Mammary epithelial cell (primary cell): ENCODE measurements at regions of chr1 and their contacts with region 1.

Region 1: DNA sequence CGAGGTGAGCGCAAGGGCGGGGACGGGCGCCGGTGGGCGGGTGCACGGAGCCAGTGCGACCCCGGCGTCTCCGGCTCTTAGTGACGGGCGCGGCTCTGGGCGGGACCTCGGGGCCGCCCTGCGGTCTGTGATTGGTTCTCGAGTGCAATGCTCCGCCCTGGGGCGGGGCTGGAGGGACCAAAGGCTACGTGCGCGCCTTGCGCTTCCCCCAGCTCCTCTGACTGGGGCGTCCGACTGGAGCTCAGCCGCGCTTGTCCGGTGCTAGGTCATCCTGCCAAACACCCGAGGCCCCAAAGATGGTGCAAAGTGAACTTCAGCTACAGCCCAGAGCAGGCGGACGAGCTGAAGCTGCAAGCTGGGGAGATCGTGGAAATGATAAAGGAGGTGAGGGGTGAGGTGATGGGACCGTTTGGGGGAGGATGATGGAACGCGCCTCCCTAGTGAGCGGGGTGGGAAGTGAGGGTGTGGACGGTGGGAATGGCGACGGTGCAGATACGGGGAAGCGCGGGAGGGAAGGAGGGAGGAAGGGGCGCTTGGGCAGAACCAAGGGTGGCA is 811 bp downstream of the SH3D21 start:
- DNase-seq: peak; percentile 92
- H3K4me3 ChIP-seq: peak overlapping the region; percentile 41 to 85 (median 59)
- H3K27ac ChIP-seq: peak overlapping the region; percentile 11
- H3K4me1 ChIP-seq: peaks cover 22% of the 10 kb centered on the region
- H3K27me3 ChIP-seq: no peaks in the 10 kb centered on the region
- CTCF ChIP-seq: no peak

Region 2: GRCh38 chr1:36257375-36257767 is 49.6 kb before region 1 on chr1:
- CTCF ChIA-PET with region 1: no interaction called
- dilution Hi-C with region 1: no loop called
- in situ Hi-C with region 1: no loop called
- intact Hi-C with region 1: no loop called
- DNase-seq: peak; percentile 16
- H3K4me3 ChIP-seq: no peak overlapping the region
- H3K27ac ChIP-seq: no peak overlapping the region
- H3K4me1 ChIP-seq: peaks cover 9% of the 10 kb centered on the region
- H3K27me3 ChIP-seq: no peaks in the 10 kb centered on the region
- CTCF ChIP-seq: no peak

Region 3: DNA sequence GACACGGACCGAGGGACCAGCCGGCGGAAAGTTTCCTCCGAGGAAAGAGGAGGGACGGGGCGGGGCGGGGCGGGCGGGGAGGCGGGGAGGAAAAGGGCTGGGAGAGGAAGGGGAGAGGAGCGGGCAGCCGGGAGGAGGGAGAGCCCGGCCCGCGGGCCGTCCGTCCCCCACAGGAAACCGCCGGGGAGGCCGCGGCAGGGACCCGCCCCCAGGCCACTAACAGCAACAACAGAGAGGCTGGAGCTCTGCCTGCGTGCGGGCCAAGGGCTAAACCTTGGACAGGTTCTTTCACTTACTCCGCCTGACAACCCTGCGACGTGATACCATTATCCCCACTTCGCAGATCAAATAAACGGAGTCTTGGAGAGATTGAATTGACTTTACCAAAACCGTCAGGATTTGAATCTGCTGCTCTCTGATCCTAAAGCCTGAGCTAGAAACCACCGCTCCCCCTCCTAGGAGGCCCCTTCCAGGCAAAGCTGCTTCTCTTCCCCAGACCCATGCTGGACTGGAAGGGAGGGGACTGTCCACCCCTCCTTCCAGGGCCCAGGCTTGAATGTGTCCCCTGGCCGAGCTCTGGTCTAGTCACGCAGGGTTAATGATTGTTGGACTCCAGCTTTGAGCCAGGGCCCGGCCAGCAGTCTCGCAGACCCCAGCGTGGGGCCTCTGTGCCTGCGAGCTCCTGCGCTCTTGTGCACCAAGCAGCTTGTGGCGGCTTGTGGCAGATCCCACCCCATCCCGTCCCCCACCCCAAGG is 16.8 kb after region 1 on chr1 and contains the start of gene EVA1B:
- CTCF ChIA-PET with region 1: no interaction called
- dilution Hi-C with region 1: no loop called
- in situ Hi-C with region 1: no loop called
- intact Hi-C with region 1: loop called (anchors 2 kb)
- DNase-seq: peak; percentile 43
- H3K4me3 ChIP-seq: peak within 1 kb of the TSS; percentile 36 to 54 (median 48)
- H3K27ac ChIP-seq: peak within 1 kb of the TSS; percentile 11
- H3K4me1 ChIP-seq: peaks cover 24% of the 10 kb centered on the region
- H3K27me3 ChIP-seq: no peaks in the 10 kb centered on the region
- CTCF ChIP-seq: no peak
- total RNA-seq, gene EVA1B: 9.2 to 10.0 TPM

Region 4: DNA sequence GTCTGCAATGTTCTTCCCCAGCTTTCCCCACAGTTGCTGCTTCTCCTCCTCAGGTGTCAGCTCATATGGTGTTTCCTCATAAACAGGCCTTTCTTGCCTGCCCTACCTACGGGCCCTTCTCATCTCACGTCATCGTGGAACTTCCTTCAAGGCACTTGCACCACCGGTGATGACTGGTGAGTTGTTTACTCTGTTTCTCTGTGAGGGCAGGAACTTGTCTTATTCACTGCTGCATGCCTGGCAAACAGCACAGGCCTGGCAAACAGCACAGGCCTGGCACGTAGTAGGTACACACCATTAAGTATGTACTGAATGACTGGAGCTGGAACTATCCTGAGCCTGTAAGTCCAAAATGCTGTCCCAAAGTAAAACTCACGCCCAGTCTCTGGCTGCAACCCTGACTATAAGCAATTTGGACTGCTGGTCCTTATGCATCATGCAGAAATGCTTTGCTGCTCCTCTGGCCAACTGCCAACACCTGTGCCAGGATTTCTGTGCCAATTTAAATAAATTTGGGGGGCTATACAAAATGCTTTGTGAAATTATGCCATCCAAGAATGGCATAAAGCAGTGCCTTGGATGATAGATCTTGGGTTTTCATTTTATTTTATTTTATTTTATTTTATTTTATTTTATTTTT is 53.1 kb after region 1 on chr1:
- CTCF ChIA-PET with region 1: no interaction called
- dilution Hi-C with region 1: no loop called
- in situ Hi-C with region 1: no loop called
- intact Hi-C with region 1: no loop called
- DNase-seq: peak; percentile 6
- H3K4me3 ChIP-seq: no peak overlapping the region
- H3K27ac ChIP-seq: no peak overlapping the region
- H3K4me1 ChIP-seq: no peaks in the 10 kb centered on the region
- H3K27me3 ChIP-seq: no peaks in the 10 kb centered on the region
- CTCF ChIP-seq: no peak

Region 5: GRCh38 chr1:36436817-36437216 is 129.8 kb after region 1 on chr1:
- CTCF ChIA-PET with region 1: no interaction called
- dilution Hi-C with region 1: no loop called
- in situ Hi-C with region 1: no loop called
- intact Hi-C with region 1: no loop called
- DNase-seq: peak; percentile 93
- H3K4me3 ChIP-seq: no peak overlapping the region
- H3K27ac ChIP-seq: peak overlapping the region; percentile 89
- H3K4me1 ChIP-seq: peaks cover 19% of the 10 kb centered on the region
- H3K27me3 ChIP-seq: no peaks in the 10 kb centered on the region
- CTCF ChIP-seq: no peak

Region 6: GRCh38 chr1:36567601-36568341 is 260.8 kb after region 1 on chr1:
- CTCF ChIA-PET with region 1: no interaction called
- dilution Hi-C with region 1: no loop called
- in situ Hi-C with region 1: no loop called
- intact Hi-C with region 1: no loop called
- DNase-seq: no peak
- H3K4me3 ChIP-seq: no peak overlapping the region
- H3K27ac ChIP-seq: no peak overlapping the region
- H3K4me1 ChIP-seq: no peaks in the 10 kb centered on the region
- H3K27me3 ChIP-seq: no peaks in the 10 kb centered on the region
- CTCF ChIP-seq: no peak